Right ventricle myocardium superior (tissue), 1 donor: ENCODE measurements at regions of chr3 and their contacts with region 1.

Region 1: DNA sequence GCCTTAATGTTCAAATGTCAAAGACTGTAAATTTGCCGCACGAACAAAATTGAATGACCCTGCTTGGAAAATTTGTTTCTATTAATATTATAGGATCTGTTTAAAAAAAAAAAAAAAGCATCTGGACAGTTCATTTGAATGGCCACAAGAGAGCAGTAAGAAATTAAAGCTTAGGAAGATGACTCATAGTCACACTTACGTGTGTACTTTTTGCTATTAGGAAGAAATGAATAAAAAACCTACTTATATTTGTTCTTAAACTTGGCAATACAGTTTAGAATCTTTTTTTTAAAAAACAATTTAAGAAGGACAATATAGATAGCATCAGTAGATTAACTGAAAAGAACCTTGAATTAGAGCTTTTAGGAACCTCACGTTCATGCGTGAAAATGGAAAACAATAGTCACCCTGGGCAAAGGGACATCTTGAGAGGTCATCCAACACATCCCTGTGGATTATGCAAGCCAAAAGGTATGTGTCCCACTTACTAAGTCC is 621.8 kb downstream of the MECOM start:
- DNase-seq: no peak
- ATAC-seq: peak; percentile 60

Region 2: DNA sequence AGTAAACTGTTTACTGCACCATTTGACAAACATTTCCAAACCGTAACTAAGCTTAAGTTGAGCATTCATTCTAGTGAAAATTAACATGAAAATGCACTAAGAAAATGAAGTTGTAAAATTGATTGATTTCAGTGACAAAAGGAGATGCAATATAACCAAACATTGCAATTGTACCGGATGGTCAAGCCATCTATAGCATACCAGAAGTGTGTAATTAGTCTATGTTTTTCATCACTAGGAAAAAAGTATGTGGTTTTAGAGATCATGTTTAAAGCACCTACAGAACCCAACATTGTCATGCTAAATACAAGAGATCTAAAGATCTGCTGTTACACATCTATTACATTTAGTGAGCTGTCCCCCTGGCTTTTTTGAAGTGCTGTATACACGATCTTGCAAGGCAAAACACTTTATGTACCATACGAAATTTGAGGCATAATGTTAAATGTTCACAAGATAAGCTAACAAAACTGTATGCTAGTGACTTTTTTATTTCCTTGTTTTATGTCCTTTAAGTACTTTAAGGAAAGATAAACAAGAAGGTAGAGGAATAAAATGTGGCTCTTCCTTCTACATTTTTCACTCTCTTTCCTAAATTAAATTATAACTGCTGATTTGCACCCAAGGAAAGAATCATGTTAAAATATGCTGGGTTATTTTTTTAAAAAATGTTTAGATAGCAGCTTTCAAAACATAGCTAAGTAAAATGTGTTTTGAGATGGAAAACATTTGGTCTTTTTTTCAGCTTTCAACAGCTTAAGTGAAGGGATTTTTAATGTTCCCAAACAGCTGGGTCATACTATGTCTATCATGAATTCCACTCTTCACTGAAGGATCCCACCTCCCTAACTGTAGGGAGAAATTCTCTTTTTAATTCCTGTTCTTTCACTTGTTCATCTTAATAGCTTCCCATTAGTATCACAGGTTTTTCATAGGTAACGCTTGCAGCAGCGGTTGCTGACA is 123.8 kb after region 1 on chr3:
- intact Hi-C with region 1: no loop called
- DNase-seq: no peak
- ATAC-seq: peak; percentile 65

Region 3: DNA sequence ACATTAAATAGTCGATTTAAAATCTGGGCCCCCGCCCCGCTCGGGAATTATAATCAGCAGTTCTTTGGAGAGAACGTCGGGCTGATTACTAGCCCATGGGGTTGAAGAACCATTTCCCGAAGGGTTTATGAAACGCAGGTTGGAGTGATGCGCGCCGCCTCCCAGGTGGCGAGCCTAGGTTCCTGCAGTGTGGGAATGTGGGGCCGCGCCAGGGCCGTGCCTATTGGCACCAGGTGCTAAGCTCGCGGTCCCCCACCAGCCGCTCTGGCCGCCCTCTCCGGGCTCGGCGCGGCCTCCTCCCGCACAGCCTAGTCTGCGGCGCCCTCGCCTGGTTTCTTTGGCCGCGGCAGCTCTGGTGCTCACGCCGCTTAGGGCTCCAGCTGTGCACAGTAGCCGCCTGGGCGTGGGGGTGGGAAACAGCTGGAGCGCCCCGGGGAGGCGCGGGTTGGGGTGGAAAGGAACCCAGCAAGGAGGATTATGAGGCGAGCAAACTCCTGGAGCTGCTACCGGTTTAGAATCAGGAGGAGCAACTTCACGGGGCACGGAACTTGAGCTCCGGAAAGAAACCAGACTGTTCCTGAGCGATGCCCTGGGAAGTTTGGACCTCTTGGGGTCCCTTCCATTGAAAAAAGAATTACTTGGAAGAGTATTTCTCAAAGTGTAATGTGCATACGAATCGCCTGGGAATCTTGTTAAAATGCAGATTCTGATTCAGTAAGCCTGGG is 627.4 kb after region 1 on chr3:
- intact Hi-C with region 1: loop called (anchors 10 kb)
- DNase-seq: peak; percentile 87
- ATAC-seq: peak; percentile 99